ENCODE measurements at regions of chr2 and their contacts with region 1.

Region 1: DNA sequence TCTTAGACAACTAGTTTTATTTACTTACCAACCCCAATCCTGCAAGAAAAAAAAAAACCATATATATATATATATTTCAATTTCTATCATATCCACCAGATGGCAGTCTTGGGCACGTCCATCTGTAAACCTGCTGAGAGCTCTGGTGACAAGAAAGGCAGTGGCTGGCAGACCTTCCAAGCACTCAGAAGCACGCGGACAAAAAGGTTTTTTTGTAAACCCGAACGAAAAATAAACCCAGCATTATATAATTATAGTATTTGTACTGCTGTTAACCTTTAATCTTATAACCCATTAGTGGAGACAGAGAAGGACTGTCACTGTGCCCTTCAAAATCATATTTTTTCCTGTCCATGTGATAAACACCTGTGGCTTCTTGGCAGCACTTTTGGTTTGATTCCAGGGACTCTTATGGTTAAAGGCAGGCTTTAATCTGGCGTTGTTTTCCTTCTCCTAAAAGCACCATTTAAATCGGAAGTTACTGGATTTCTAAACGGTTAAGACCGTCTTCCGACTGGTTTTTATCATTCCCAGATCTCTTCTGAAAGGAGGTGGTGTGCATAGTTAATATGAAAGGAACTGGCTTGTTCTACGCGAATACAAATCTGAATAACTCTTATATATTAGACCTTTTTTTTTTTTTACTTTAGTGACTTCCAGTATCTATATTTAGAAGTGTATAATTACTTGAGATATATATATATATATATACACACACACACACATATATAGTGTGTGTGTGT is 31.0 kb upstream of the SLC3A1 start:
- DNase-seq: peak; percentile 83
- H3K4me3 Mint-ChIP-seq: peak overlapping the region; percentile 65
- H3K27ac Mint-ChIP-seq: no peak overlapping the region
- H3K4me1 Mint-ChIP-seq: peaks cover 7% of the 10 kb centered on the region
- H3K27me3 Mint-ChIP-seq: peaks cover 5% of the 10 kb centered on the region

Region 2: DNA sequence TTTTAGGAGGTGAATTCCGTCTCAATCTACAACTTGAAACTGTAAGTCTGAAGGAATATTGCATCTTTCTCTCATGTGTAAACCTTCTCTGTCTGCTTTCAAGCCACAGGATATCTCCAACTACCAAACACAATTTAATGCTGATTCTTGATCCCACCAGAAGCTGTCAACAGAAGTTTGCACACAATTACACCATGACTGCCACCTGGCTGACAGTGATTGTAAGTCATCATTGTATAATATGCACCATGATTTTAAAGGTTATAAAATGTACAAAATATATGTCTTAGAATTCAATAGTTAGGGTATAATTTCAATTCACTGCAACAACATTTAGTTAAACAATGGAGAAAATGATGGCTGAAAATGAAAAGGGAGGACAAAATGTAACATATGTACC is 98.6 kb after region 1 on chr2:
- intact Hi-C with region 1: loop called (anchors 5 kb)
- DNase-seq: no peak
- H3K4me3 Mint-ChIP-seq: no peak overlapping the region
- H3K27ac Mint-ChIP-seq: no peak overlapping the region
- H3K4me1 Mint-ChIP-seq: no peaks in the 10 kb centered on the region
- H3K27me3 Mint-ChIP-seq: no peaks in the 10 kb centered on the region

Measured in activated CD4-positive, alpha-beta T cell treated with anti-CD3 and anti-CD28 coated beads, Interleukin-2, amount 10 ng/mL, durations not matched to agents 24 days and 14 days (primary cell).